Mammary epithelial cell (primary cell): ENCODE measurements at regions of chr22 and their contacts with region 1.

Region 1: DNA sequence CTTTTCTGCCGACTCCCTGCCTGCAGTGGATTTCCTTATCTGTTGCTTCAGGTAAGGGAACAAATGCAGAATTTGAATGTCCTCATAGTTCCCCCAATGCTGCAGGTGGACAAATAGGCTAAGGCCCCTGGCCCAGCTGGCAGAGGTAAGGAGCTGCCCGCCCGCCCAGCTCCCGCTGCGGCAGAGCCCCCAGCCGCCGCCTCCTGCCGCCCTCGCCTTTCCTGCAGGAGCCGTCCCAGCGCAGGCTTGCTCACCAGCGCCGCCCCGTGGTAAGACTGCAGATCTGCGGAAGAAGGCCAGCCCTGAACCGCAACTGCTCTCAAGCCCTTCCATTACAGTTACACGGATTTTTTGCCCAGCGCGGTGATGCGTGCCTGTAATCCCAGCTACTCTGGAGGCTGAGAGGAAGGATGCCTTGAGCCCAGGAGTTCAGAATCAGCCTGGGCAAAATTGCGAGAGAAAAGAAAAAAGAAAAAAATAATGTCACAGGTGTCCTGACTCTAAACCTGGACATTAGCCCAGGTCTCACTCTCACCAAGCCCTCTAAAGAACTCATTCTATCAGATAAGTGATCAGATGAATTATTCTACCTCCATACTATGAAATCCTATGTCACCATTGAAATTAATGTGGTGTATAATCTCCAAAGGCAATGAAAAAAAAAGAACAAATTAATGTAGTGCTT is 51.2 kb upstream of the EMID1 start:
- DNase-seq: peak; percentile 37
- H3K4me3 ChIP-seq: no peak overlapping the region
- H3K27ac ChIP-seq: no peak overlapping the region
- H3K4me1 ChIP-seq: no peaks in the 10 kb centered on the region
- H3K27me3 ChIP-seq: no peaks in the 10 kb centered on the region
- CTCF ChIP-seq: peak; percentile 90 to 97

Region 2: GRCh38 chr22:27185760-27186302 is 1968.7 kb before region 1 on chr22:
- CTCF ChIA-PET with region 1: no interaction called
- dilution Hi-C with region 1: no loop called
- in situ Hi-C with region 1: no loop called
- intact Hi-C with region 1: no loop called
- DNase-seq: no peak
- H3K4me3 ChIP-seq: no peak overlapping the region
- H3K27ac ChIP-seq: no peak overlapping the region
- H3K4me1 ChIP-seq: no peaks in the 10 kb centered on the region
- H3K27me3 ChIP-seq: no peaks in the 10 kb centered on the region
- CTCF ChIP-seq: no peak

Region 3: GRCh38 chr22:28600546-28601143 is 553.9 kb before region 1 on chr22:
- CTCF ChIA-PET with region 1: no interaction called
- dilution Hi-C with region 1: no loop called
- in situ Hi-C with region 1: no loop called
- intact Hi-C with region 1: loop called (anchors 2 kb)
- DNase-seq: peak; percentile 24
- H3K4me3 ChIP-seq: no peak overlapping the region
- H3K27ac ChIP-seq: no peak overlapping the region
- H3K4me1 ChIP-seq: no peaks in the 10 kb centered on the region
- H3K27me3 ChIP-seq: no peaks in the 10 kb centered on the region
- CTCF ChIP-seq: peak; percentile 34 to 46

Region 4: DNA sequence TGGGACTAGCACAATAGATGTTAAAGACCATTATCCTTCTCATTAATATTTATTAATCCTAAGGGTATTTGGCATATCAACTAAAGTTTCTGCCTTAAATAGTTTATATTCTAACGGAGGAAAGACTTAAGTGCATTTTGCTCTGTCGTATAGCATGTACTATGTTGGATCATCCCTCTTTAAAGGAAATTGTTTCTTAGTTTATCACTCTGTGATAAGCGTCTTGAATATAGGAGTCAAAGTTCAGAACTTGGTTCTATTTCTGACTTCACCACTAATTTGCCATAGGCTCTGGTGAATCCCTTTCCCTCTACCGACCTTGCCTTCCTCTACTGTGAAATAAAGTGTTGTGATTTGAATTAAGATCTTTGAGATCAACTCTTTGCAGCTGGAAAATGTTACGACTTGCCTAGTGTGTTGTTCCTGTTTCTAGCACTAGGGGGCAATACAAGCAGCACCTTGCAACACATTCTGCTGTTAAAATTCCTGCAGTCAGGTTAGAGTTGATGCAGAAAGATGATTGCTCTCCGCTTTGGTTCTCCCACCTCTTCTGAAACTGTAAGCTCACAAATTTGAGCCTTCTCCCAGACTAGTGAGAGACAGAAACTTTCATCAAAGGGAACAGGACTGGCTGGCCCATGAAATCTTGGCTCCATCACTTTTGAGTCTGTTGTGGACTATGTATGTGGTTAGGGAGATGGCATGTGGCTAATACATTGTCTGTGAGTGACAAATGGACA is 299.0 kb before region 1 on chr22:
- CTCF ChIA-PET with region 1: interaction called, 5 read pairs
- dilution Hi-C with region 1: no loop called
- in situ Hi-C with region 1: loop called in 1 of 2 experiments (anchors 25 kb)
- intact Hi-C with region 1: loop called (anchors 1 kb)
- DNase-seq: peak; percentile 50
- H3K4me3 ChIP-seq: no peak overlapping the region
- H3K27ac ChIP-seq: no peak overlapping the region
- H3K4me1 ChIP-seq: no peaks in the 10 kb centered on the region
- H3K27me3 ChIP-seq: no peaks in the 10 kb centered on the region
- CTCF ChIP-seq: peak; percentile 85 to 91

Region 5: DNA sequence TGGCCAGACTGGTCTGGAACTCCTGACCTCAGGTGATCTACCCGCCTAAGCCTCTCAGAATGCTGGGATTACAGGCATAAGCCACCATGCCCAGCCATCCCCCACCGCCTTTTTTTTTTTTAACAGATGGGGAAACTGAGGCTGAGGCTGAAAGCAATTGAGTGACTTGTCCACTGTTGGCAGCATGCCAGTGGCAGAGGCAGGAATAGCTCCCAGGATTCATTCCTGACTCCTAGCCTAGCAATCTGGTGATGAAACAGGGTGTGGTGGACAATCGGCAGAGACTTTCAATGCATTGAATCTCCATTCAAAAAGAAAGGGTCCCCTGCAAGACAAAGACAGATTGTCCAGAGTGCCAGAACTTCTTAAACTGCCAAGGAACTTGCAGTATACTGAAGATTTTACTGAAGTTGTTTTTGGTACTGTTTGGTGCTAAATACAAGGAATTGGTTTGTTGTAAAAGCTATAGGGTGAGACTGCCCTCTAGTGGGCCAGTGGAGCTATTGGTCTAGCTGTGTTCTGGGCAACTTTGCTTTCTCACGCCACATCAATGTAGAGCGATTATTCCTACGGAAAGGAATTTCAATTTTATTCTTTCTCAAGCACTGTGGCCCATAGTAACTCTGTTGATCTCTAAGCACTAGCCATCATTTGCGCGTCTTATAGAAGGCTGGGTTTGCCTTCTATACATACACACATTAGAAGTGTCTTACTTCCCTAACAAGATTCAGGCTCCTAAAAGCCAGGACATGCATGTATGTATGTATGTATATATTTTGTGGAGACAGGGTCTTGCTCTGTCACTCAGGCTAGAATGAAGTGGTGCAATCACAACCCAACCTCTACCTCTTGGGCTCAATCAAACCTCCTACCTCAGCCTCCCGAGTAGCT is 113.9 kb before region 1 on chr22:
- CTCF ChIA-PET with region 1: interaction called, 24 read pairs
- dilution Hi-C with region 1: no loop called
- in situ Hi-C with region 1: no loop called
- intact Hi-C with region 1: loop called (anchors 1 kb)
- DNase-seq: peak; percentile 63
- H3K4me3 ChIP-seq: no peak overlapping the region
- H3K27ac ChIP-seq: peak overlapping the region; percentile 25
- H3K4me1 ChIP-seq: peaks cover 30% of the 10 kb centered on the region
- H3K27me3 ChIP-seq: no peaks in the 10 kb centered on the region
- CTCF ChIP-seq: peak; percentile 98 to 99

Region 6: GRCh38 chr22:29055192-29055830 is 99.2 kb before region 1 on chr22:
- CTCF ChIA-PET with region 1: no interaction called
- dilution Hi-C with region 1: no loop called
- in situ Hi-C with region 1: no loop called
- intact Hi-C with region 1: loop called (anchors 5 kb)
- DNase-seq: no peak
- H3K4me3 ChIP-seq: no peak overlapping the region
- H3K27ac ChIP-seq: no peak overlapping the region
- H3K4me1 ChIP-seq: no peaks in the 10 kb centered on the region
- H3K27me3 ChIP-seq: no peaks in the 10 kb centered on the region
- CTCF ChIP-seq: no peak

Region 7: GRCh38 chr22:29080056-29080975 is 74.2 kb before region 1 on chr22:
- CTCF ChIA-PET with region 1: no interaction called
- dilution Hi-C with region 1: no loop called
- in situ Hi-C with region 1: no loop called
- intact Hi-C with region 1: loop called (anchors 2 kb)
- DNase-seq: peak; percentile 26
- H3K4me3 ChIP-seq: no peak overlapping the region
- H3K27ac ChIP-seq: no peak overlapping the region
- H3K4me1 ChIP-seq: peaks cover 5% of the 10 kb centered on the region
- H3K27me3 ChIP-seq: no peaks in the 10 kb centered on the region
- CTCF ChIP-seq: peak in 1 of 2 donors; percentile 31

Region 8: GRCh38 chr22:29245637-29246385 is 91.3 kb after region 1 on chr22:
- CTCF ChIA-PET with region 1: no interaction called
- dilution Hi-C with region 1: no loop called
- in situ Hi-C with region 1: loop called in 1 of 2 experiments (anchors 10 kb)
- intact Hi-C with region 1: loop called (anchors 1 kb)
- DNase-seq: peak; percentile 34
- H3K4me3 ChIP-seq: no peak overlapping the region
- H3K27ac ChIP-seq: no peak overlapping the region
- H3K4me1 ChIP-seq: no peaks in the 10 kb centered on the region
- H3K27me3 ChIP-seq: peaks cover 3% of the 10 kb centered on the region
- CTCF ChIP-seq: peak; percentile 96 to 98